ENCODE measurements at regions of chr14 and their contacts with region 1.

Region 1: DNA sequence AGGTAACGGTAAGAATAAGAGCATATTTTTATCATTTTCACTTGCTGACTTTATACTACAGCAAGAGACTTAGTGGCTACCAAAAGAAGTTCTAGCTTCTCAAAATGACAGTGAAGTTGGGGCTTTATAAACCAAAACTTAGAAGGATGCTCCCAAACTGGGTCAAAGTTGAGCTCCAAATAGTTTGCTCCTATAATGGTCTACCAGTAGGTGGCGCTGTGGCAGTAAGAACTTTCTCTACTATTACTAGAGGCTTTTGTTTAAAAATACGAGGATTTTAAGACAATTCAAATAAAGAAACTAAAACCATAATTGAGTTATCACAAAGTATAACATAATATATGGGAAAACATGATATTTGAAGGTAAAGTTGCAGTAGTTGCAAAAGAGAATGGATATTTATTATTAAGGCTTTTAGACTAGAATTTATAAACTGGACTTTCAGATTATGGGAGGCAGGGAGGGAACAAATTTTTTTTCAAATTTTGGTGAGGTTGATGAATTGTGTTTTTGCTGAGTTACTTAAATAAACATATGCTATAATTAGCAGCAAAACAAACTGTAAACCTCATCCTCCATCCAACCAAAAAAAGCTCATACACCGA is 75.0 kb downstream of the TGFB3 start:
- H3K4me3 ChIP-seq: no peak overlapping the region
- H3K27ac ChIP-seq: no peak overlapping the region
- H3K4me1 ChIP-seq: peaks cover 17% of the 10 kb centered on the region
- CTCF ChIP-seq: 0 out of 2 replicates have a peak, but pooled peaks have one; percentile 6

Region 2: GRCh38 chr14:75864352-75864751 is 42.4 kb before region 1 on chr14:
- CTCF ChIA-PET with region 1: interaction called, 14 read pairs
- POLR2A ChIA-PET with region 1: no interaction called
- H3K4me3 ChIP-seq: no peak overlapping the region
- H3K27ac ChIP-seq: no peak overlapping the region
- H3K4me1 ChIP-seq: peaks cover 27% of the 10 kb centered on the region
- CTCF ChIP-seq: no peak

Region 3: DNA sequence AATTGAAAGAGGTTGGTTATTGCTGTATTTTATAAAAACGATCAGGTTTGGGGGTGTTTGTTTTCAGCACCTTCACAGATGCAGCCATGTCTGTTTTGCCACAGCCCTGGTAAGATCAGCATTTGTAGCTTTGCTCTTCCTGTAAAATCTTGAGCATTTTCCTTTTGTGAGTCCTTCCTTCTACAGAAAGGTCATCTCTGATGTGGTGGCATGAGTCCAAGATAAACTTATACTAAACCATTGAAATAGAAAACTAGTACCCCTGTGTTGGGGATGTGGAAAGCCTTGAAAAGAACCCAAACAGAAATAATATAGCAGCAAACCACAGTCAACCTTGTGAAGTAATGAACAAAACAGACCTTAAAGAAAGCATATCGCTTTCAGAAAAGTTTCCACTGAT is 10.4 kb before region 1 on chr14:
- CTCF ChIA-PET with region 1: interaction called, 10 read pairs
- POLR2A ChIA-PET with region 1: no interaction called
- H3K4me3 ChIP-seq: no peak overlapping the region
- H3K27ac ChIP-seq: no peak overlapping the region
- H3K4me1 ChIP-seq: peaks cover 5% of the 10 kb centered on the region; the same call in 1 of the 2 replicates
- CTCF ChIP-seq: no peak

Region 4: DNA sequence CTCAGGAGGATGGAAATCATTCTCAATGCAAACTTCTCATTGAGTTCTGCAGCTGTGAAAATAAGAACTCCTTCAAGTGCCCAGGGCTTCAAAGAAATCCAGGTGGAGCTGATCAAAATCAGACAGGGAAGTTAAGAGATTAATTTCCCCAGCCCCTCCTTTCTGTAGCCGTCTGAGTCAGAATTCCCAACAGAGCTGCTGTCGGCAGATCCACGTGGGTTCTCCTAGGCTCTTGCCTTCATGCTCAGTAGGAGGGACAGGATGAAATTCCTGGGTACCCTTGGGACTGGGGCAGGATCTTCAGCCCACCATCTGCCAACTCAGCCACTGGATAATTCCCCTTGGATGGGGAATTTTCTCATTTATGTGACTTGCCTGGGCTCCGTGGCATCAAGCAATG is 61.7 kb after region 1 on chr14:
- CTCF ChIA-PET with region 1: interaction called, 13 read pairs
- POLR2A ChIA-PET with region 1: no interaction called
- H3K4me3 ChIP-seq: no peak overlapping the region
- H3K27ac ChIP-seq: no peak overlapping the region
- H3K4me1 ChIP-seq: no peaks in the 10 kb centered on the region
- CTCF ChIP-seq: no peak

Region 5: GRCh38 chr14:75982266-75983018 is 75.7 kb after region 1 on chr14:
- CTCF ChIA-PET with region 1: interaction called, 82 read pairs
- POLR2A ChIA-PET with region 1: no interaction called
- H3K4me3 ChIP-seq: peak overlapping the region; percentile 58
- H3K27ac ChIP-seq: peak overlapping the region; percentile 86
- H3K4me1 ChIP-seq: peaks cover 7% of the 10 kb centered on the region
- CTCF ChIP-seq: no peak

Region 6: DNA sequence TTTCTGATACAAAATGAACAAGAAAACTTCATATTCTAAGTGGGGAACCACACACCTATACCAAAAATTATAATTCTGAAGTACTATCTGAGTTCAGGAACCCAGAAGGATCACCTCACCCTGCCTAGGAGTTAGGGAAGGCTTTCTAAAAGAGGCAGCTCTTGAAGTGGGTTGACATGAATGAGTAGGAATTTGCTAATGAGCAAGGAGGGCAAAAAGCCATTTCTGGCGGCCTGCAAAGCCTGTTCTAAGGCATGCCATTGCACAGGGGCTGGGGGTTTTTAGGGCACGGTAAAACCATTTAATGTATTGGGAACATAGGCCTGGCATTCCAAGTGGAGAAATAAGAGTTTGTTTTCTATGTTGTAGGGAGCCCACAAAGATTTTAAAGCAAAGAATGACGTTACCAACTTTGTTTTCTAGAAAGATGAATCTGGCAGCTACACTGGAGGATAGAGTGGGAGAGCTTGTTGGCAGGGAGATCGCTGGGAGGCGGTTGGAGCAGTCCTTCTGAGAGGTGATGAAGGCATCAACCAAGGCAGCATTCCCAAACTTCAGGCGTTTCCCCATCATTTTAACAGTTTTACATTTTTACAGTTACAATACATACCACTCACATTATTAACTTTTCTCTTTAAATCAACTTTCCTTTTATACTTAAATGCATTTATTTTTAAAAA is 92.9 kb after region 1 on chr14:
- CTCF ChIA-PET with region 1: no interaction called
- POLR2A ChIA-PET with region 1: no interaction called
- H3K4me3 ChIP-seq: no peak overlapping the region
- H3K27ac ChIP-seq: no peak overlapping the region
- H3K4me1 ChIP-seq: no peaks in the 10 kb centered on the region
- CTCF ChIP-seq: no peak

Measured in HEK293 (cell line).